ENCODE measurements at regions of chr12 and their contacts with region 1.

Region 1: GRCh38 chr12:54381136-54381535 is 3.4 kb downstream of the ZNF385A start:
- DNase-seq: no peak
- H3K4me3 ChIP-seq: no peak overlapping the region
- H3K27ac ChIP-seq: no peak overlapping the region
- H3K4me1 ChIP-seq: no peaks in the 10 kb centered on the region
- H3K27me3 ChIP-seq: no peaks in the 10 kb centered on the region
- CTCF ChIP-seq: no peak
- POLR2A ChIP-seq: no peak

Region 2: DNA sequence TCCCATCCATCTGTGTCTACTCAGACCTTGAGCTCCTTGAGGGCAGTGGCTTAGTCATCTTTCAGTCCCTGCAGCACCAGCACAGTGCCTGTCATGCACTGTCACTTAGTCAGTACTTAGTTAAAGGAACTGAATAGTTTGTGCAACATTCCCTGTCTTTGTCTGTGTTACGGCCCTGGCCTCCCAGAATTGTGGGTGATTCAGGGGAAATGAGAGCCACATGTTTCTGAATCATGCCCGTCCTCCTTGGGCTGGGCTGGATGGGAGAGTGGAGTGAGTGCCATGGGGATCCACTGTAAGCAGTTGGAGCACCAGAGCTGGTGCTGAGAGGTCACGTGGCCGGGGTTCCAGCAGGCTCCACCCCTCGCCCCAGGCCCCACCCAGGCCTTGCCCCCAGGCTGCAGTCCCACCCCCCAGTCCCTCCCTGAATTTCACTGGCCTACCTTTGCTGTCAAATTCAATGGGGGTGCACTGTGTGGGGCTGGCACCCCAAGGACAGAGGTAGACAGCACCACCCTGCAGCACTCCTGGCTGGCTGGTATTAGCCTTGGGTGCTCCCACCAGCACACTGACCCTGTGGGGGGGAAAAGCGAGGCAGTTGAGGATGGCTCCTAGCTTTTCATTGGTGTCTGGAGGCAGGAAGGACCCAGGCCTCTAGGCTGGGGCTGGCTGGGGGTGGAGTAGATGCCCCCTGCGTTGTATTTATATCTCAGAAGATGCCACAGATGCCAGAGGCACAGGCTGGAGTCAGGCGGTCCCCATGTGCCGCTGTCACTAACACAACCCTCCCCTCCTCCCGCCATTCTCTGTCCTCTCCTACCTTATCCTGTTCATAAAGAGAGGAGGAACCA is 30.5 kb after region 1 on chr12:
- intact Hi-C with region 1: loop called (anchors 1 kb)
- DNase-seq: no peak
- H3K4me3 ChIP-seq: no peak overlapping the region
- H3K27ac ChIP-seq: peak overlapping the region; percentile 50 to 82
- H3K4me1 ChIP-seq: peaks cover 0 to 5% of the 10 kb centered on the region in 2 donors
- H3K27me3 ChIP-seq: no peaks in the 10 kb centered on the region
- CTCF ChIP-seq: no peak
- POLR2A ChIP-seq: no peak